Mucosa of descending colon (tissue), 3 donors: ENCODE measurements at regions of chr6 and their contacts with region 1.

Region 1: GRCh38 chr6:166333172-166333995 is 9.0 kb downstream of the SFT2D1 start:
- DNase-seq: peak in 1 of 3 donors; percentile 16
- ATAC-seq: peak; percentile 55
- H3K4me3 ChIP-seq: no peak overlapping the region
- H3K4me1 ChIP-seq: peaks cover 22% of the 10 kb centered on the region
- CTCF ChIP-seq: no peak

Region 2: GRCh38 chr6:166078294-166078693 is 255.1 kb before region 1 on chr6:
- intact Hi-C with region 1: no loop called
- DNase-seq: no peak
- ATAC-seq: peak; percentile 22
- H3K4me3 ChIP-seq: no peak overlapping the region
- H3K4me1 ChIP-seq: no peaks in the 10 kb centered on the region
- CTCF ChIP-seq: no peak

Region 3: GRCh38 chr6:166382933-166383801 is 49.8 kb after region 1 on chr6 and contains the start of gene MPC1:
- intact Hi-C with region 1: loop called in 1 of 2 experiments (anchors 10 kb)
- DNase-seq: peak; percentile 97 to 99 (median 97)
- ATAC-seq: peak; percentile 93
- H3K4me3 ChIP-seq: peak within 1 kb of the TSS; percentile 92
- H3K4me1 ChIP-seq: no peaks in the 10 kb centered on the region
- CTCF ChIP-seq: no peak
- total RNA-seq, gene MPC1: 75.0 to 139 (median 117) TPM

Region 4: DNA sequence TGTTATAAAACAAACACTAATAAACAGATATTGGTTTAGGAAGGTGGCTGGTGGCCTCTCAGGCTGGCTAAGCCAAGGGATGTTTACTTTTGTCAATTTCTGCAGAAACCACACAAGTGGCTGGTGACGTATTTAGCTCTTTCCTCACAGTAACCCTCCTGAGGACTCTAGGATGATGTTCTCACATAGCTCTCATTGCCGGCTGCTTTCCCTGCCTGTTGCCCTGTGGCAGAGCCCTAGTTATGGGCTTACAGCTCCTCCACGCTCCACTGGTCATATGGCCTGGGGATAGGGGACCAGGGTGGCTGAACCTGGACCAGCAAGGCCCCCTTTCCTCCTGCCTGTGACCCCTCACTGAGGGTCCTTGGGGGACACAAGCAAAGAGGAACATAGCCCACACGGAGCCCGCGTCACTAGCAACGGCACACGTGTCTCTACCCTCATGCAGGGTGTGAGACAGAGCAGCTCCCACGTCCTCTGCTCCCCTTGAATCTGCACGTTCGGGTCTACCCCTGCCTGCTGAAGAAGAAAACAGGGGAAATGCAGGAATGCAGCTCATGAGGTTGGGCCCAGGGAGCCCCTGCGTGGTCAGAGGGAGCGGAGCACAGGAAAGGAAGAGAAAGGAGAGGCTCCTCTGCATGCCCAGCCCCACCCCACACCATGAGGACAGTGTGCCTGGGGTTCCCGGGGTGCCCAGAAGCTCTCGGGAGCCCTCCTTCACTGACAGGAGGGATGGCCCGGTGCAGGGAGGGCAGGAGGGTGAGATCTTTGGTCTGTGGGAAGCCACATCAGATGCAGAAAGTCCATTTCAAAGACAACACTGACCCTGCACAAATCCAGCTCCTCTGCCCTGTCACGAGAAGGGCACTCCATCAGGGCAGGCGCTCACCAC is 239.2 kb after region 1 on chr6:
- intact Hi-C with region 1: no loop called
- DNase-seq: peak in 1 of 3 donors; percentile 34
- ATAC-seq: peak; percentile 55
- H3K4me3 ChIP-seq: no peak overlapping the region
- H3K4me1 ChIP-seq: peaks cover 2% of the 10 kb centered on the region
- CTCF ChIP-seq: no peak